ENCODE measurements at regions of chr1 and their contacts with region 1.

Region 1: GRCh38 chr1:197868751-197869489 is 33.5 kb upstream of the C1orf53 start:
- DNase-seq: peak; percentile 54
- ATAC-seq: peak; percentile 94
- H3K4me3 Mint-ChIP-seq: no peak overlapping the region
- H3K27ac Mint-ChIP-seq: no peak overlapping the region
- H3K4me1 Mint-ChIP-seq: peaks cover 3% of the 10 kb centered on the region
- H3K27me3 Mint-ChIP-seq: no peaks in the 10 kb centered on the region

Region 2: DNA sequence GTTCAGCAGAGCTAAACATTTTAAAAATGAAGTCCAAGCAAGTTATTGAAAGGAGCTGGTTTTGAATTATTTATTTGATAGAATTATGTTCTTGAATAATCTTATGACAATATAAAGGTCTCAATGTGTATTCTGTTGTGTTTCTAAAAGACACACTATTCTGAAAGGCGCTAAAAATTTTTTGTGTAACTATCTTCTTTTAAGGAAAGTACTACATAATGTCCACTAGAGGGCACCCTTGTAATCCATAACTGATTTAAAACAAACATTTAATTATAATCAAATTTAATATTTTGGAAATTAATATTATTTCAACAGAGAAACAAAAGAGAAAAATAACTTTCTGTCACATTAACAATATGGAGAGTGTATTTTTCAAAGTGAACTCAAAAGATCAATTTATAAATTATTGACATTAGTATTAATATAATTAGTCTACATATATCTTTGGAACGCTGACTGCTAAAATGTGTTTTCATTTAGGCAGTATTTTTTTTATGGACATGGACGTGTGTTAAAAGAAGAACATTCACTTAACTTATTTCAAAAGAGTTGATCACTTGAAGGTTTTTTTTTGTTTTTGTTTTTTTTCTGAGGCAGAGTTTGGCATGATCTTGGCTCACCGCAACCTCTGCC is 342.1 kb before region 1 on chr1:
- CTCF ChIA-PET with region 1: interaction called, 20 read pairs
- POLR2A ChIA-PET with region 1: no interaction called
- intact Hi-C with region 1: loop called (anchors 1 kb)
- DNase-seq: no peak
- ATAC-seq: no peak
- H3K4me3 Mint-ChIP-seq: no peak overlapping the region
- H3K27ac Mint-ChIP-seq: no peak overlapping the region
- H3K4me1 Mint-ChIP-seq: no peaks in the 10 kb centered on the region
- H3K27me3 Mint-ChIP-seq: no peaks in the 10 kb centered on the region

Region 3: GRCh38 chr1:197614916-197615692 is 253.8 kb before region 1 on chr1:
- CTCF ChIA-PET with region 1: interaction called, 53 read pairs
- POLR2A ChIA-PET with region 1: no interaction called
- intact Hi-C with region 1: loop called (anchors 1 kb)
- DNase-seq: peak; percentile 54
- ATAC-seq: peak; percentile 70
- H3K4me3 Mint-ChIP-seq: no peak overlapping the region
- H3K27ac Mint-ChIP-seq: no peak overlapping the region
- H3K4me1 Mint-ChIP-seq: no peaks in the 10 kb centered on the region
- H3K27me3 Mint-ChIP-seq: no peaks in the 10 kb centered on the region

Region 4: GRCh38 chr1:197685785-197686184 is 183.1 kb before region 1 on chr1:
- CTCF ChIA-PET with region 1: no interaction called
- POLR2A ChIA-PET with region 1: no interaction called
- intact Hi-C with region 1: loop called in 1 of 2 experiments (anchors 5 kb)
- DNase-seq: no peak
- ATAC-seq: no peak
- H3K4me3 Mint-ChIP-seq: no peak overlapping the region
- H3K27ac Mint-ChIP-seq: no peak overlapping the region
- H3K4me1 Mint-ChIP-seq: peaks cover 23% of the 10 kb centered on the region
- H3K27me3 Mint-ChIP-seq: no peaks in the 10 kb centered on the region